Activated CD4-positive, alpha-beta T cell treated with anti-CD3 and anti-CD28 coated beads for 36 hours (primary cell): ENCODE measurements at regions of chr12 and their contacts with region 1.

Region 1: DNA sequence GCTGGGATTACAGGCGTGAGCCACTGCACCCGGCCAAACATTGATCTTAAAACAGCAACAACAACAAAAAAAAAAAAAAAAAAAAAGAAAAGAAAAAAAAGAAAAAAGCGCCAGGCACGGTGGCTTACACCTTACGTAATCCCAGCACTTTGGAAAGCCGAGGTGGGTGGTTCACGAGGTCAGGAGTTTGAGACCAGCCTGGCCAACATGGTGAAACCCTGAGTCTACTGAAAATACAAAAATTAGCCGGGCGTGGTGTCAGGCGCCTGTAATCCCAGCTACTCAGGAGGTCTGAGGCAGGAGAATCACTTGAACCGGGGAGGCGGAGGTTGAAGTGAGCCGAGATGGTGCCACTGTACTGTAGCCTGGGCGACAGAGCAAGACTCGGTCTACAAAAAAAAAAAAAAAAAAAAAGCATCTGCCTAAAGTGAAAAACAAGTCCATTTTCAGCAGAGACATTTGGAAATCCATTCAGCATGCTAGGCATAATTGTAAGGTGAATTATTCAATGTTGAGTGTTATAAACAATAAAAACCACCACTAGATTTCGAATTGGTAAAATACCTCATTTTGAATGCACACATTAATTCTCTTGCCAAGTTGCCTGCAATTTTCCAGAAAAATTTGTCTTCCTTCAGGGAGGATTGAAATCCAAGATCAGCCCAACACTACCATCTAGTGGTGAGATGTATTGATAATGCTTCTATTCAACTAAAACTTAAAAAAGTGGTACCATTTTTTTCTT is 8.0 kb upstream of the CERS5 start:
- DNase-seq: no peak
- ATAC-seq: no peak
- H3K4me3 Mint-ChIP-seq: no peak overlapping the region
- H3K27ac Mint-ChIP-seq: no peak overlapping the region
- H3K4me1 Mint-ChIP-seq: no peaks in the 10 kb centered on the region
- H3K27me3 Mint-ChIP-seq: no peaks in the 10 kb centered on the region

Region 2: DNA sequence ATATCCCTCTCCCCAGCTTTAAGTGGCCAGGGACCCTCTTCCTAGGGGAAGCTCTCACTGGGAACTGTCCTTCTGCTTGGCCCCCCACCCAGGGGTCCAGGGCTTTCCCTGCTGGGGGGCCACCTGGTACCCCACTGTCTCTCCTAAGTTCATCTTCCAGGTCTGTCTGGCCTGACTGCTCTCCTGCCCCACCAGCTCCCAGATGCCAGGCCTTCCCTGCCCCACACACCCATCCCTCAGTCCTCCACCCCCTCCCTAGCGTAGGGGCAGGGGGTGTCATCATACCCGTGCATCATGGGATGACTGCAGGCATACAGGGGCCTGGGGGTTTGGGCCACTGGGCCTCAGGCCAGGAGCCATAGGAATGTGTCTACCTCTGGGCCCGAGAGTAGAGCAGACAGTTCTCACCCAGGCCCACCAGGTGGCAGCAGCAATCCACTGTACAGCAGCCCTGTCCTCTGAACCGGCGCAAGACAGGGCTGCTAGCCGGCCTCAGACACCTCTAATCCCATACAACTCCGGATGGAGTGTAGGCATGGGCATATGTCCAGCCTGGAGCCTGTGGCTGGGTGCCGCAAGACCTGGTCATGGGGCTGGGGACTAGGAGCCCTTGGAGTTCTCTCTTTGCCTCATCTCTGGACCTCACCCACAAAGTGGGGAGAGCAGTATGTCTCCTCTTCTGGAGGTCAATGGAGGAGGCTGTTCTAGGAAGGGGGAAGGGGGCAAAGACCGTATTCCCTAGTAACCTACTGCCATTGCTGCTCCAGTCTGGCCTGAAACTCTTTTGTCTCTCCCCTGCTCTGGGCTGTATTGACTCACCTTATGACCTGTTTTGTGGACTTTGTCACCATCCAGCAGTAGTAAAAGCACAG is 100.0 kb before region 1 on chr12:
- CTCF ChIA-PET with region 1: interaction called, 5 read pairs
- POLR2A ChIA-PET with region 1: no interaction called
- intact Hi-C with region 1: loop called (anchors 1 kb)
- DNase-seq: peak; percentile 90
- ATAC-seq: peak; percentile 98
- H3K4me3 Mint-ChIP-seq: no peak overlapping the region
- H3K27ac Mint-ChIP-seq: no peak overlapping the region
- H3K4me1 Mint-ChIP-seq: peaks cover 8% of the 10 kb centered on the region
- H3K27me3 Mint-ChIP-seq: no peaks in the 10 kb centered on the region

Region 3: GRCh38 chr12:50127546-50127945 is 47.6 kb before region 1 on chr12:
- CTCF ChIA-PET with region 1: interaction called, 43 read pairs
- POLR2A ChIA-PET with region 1: no interaction called
- intact Hi-C with region 1: loop called (anchors 1 kb)
- DNase-seq: no peak
- ATAC-seq: no peak
- H3K4me3 Mint-ChIP-seq: no peak overlapping the region
- H3K27ac Mint-ChIP-seq: peak overlapping the region; percentile 29
- H3K4me1 Mint-ChIP-seq: peaks cover 12% of the 10 kb centered on the region
- H3K27me3 Mint-ChIP-seq: no peaks in the 10 kb centered on the region

Region 4: GRCh38 chr12:50145439-50145838 is 29.7 kb before region 1 on chr12:
- CTCF ChIA-PET with region 1: interaction called, 10 read pairs
- POLR2A ChIA-PET with region 1: no interaction called
- intact Hi-C with region 1: no loop called
- DNase-seq: no peak
- ATAC-seq: no peak
- H3K4me3 Mint-ChIP-seq: no peak overlapping the region
- H3K27ac Mint-ChIP-seq: no peak overlapping the region
- H3K4me1 Mint-ChIP-seq: peaks cover 15% of the 10 kb centered on the region
- H3K27me3 Mint-ChIP-seq: no peaks in the 10 kb centered on the region

Region 5: GRCh38 chr12:50187084-50187900 is 12.1 kb after region 1 on chr12:
- CTCF ChIA-PET with region 1: interaction called, 38 read pairs
- POLR2A ChIA-PET with region 1: interaction called, 3 read pairs
- intact Hi-C with region 1: no loop called
- DNase-seq: peak; percentile 73
- ATAC-seq: peak; percentile 74
- H3K4me3 Mint-ChIP-seq: peak overlapping the region; percentile 40
- H3K27ac Mint-ChIP-seq: peak overlapping the region; percentile 87
- H3K4me1 Mint-ChIP-seq: peaks cover 55% of the 10 kb centered on the region
- H3K27me3 Mint-ChIP-seq: no peaks in the 10 kb centered on the region